ENCODE measurements at regions of chr9 and their contacts with region 1.

Region 1: DNA sequence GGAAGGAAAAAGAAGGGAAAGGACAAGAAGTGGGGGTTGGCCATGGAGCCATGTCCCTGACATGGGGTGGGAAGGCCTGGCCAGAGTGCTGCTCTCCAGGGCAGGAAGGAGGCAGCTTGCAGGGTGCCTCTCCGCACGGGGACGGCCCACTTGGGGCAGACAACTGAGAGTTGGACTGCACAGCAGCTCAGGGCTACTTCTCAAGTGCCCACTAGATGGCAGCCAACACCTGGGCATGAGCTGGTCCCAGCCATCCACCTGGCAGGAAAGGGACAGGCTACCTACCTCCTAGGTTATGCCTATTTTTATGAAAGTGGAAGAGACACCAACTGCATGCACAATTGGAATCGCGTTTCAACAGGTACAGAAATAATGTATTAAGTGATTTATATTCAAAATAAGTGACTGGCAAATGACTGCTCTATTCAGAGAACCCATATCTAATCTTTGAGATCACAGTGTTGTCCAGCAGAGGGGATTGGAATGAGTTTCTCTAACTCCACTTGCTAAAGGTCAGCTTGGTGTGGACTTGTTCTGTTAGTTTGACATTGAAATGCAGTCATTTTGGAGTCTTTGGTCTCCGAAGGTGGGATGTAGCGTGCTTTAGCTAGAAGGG is 113.4 kb downstream of the SYK start:
- DNase-seq: peak; percentile 87
- H3K4me3 ChIP-seq: peak overlapping the region in 1 of 2 experiments; percentile 37; a peak in 1 of 4 replicates
- H3K27ac ChIP-seq: no peak overlapping the region
- H3K4me1 ChIP-seq: no peaks in the 10 kb centered on the region; a peak in 1 of 4 replicates
- H3K27me3 ChIP-seq: no peaks in the 10 kb centered on the region
- CTCF ChIP-seq: peak; percentile 95
- EP300 ChIP-seq: no peak
- RAD21 ChIP-seq: peak; percentile 94

Region 2: DNA sequence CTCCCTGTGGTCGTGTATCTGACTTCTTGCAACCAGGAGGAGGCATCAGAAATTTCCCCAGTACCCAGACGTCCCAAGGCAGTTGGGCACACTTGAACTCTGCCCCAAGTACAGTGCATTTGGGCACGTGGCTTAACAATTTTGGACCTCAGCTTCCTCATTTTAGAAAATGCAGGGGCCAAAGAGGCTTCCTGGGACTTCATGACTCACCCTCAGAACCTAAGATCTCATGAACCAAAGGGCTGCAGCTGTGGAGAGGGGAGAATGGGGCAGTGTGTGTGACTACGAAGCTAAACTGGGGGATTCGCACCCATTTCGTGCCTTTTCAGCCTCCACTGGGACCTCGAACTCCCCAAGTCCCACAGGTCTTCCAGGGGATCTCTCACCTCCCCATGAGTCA is 54.1 kb before region 1 on chr9:
- CTCF ChIA-PET with region 1: no interaction called
- POLR2A ChIA-PET with region 1: no interaction called
- DNase-seq: no peak
- H3K4me3 ChIP-seq: no peak overlapping the region
- H3K27ac ChIP-seq: no peak overlapping the region
- H3K4me1 ChIP-seq: no peaks in the 10 kb centered on the region; a peak in 1 of 4 replicates
- H3K27me3 ChIP-seq: no peaks in the 10 kb centered on the region
- CTCF ChIP-seq: no peak
- EP300 ChIP-seq: no peak
- RAD21 ChIP-seq: no peak

Region 3: GRCh38 chr9:90894986-90895687 is 19.8 kb before region 1 on chr9:
- CTCF ChIA-PET with region 1: interaction called, 44 read pairs
- POLR2A ChIA-PET with region 1: no interaction called
- DNase-seq: peak; percentile 60
- H3K4me3 ChIP-seq: no peak overlapping the region
- H3K27ac ChIP-seq: no peak overlapping the region
- H3K4me1 ChIP-seq: no peaks in the 10 kb centered on the region; a peak in 1 of 4 replicates
- H3K27me3 ChIP-seq: no peaks in the 10 kb centered on the region; the same call in 1 of the 2 replicates
- CTCF ChIP-seq: peak; percentile 61
- EP300 ChIP-seq: no peak
- RAD21 ChIP-seq: no peak

Region 4: DNA sequence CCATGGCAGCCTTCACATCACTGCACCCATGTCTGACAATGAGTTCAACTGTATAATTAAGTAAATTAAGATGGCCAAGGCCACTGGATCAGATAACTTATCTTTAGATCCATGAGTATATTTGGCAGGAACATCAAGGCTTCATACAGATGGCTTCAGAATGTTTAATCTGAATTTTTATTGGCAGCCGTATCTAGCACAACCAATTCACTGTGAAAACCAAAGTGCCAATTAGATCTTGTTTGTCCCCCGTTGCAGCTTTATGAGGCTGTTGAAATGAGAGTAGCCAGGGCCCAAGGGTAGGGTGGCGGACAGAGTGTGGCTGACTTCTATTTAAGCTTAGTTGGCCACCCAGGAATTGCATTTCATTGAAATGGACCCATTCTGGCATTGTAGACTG is 24.4 kb after region 1 on chr9:
- CTCF ChIA-PET with region 1: interaction called, 44 read pairs
- POLR2A ChIA-PET with region 1: no interaction called
- DNase-seq: no peak
- H3K4me3 ChIP-seq: no peak overlapping the region
- H3K27ac ChIP-seq: no peak overlapping the region
- H3K4me1 ChIP-seq: no peaks in the 10 kb centered on the region; a peak in 1 of 4 replicates
- H3K27me3 ChIP-seq: no peaks in the 10 kb centered on the region; the same call in 1 of the 2 replicates
- CTCF ChIP-seq: no peak
- EP300 ChIP-seq: no peak
- RAD21 ChIP-seq: no peak

Region 5: DNA sequence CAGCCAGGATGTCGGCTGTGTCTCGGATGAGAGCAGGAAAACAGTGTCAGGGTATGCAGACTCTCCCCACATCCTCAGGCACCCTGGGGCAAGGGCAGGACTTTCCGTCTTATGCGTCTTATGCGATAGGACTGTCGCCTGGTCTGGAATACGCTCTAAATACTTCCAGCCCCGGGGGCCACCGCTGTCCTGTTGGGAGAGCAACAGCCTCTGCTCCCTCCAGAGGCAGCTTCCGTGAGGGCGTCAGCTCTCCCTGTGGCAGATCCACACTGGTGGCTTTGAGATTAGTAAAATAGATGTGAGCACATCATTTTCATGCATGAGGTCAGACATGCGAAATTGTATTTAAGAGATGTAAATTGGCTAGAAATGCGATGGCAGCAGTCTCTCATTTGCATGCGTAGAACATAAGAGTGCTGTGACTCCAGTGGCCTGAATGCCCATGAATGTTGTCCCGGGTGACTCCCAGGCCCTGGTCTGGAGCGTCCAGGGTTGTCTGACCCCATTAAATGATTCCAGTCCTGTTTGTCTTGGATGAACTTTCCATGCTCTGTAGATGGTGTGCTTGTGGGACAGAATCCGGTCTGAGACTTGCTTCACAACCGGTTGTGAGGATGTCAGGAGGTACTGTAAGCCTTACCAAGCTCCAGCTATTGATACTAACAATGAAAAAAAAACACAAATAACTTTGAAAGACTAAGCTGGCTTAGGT is 114.8 kb after region 1 on chr9:
- CTCF ChIA-PET with region 1: interaction called, 11 read pairs
- POLR2A ChIA-PET with region 1: no interaction called
- DNase-seq: no peak
- H3K4me3 ChIP-seq: no peak overlapping the region
- H3K27ac ChIP-seq: no peak overlapping the region
- H3K4me1 ChIP-seq: no peaks in the 10 kb centered on the region
- H3K27me3 ChIP-seq: no peaks in the 10 kb centered on the region
- CTCF ChIP-seq: no peak
- EP300 ChIP-seq: no peak
- RAD21 ChIP-seq: no peak

Region 6: GRCh38 chr9:91422758-91423711 is 508.1 kb after region 1 on chr9:
- CTCF ChIA-PET with region 1: interaction called, 67 read pairs
- POLR2A ChIA-PET with region 1: interaction called, 3 read pairs
- DNase-seq: no peak
- H3K4me3 ChIP-seq: peak overlapping the region; percentile 77 to 94
- H3K27ac ChIP-seq: peak overlapping the region; percentile 76 to 85
- H3K4me1 ChIP-seq: peaks cover 6 to 17% of the 10 kb centered on the region in 2 experiments
- H3K27me3 ChIP-seq: no peaks in the 10 kb centered on the region
- CTCF ChIP-seq: peak; percentile 28
- EP300 ChIP-seq: no peak
- RAD21 ChIP-seq: no peak

Region 7: DNA sequence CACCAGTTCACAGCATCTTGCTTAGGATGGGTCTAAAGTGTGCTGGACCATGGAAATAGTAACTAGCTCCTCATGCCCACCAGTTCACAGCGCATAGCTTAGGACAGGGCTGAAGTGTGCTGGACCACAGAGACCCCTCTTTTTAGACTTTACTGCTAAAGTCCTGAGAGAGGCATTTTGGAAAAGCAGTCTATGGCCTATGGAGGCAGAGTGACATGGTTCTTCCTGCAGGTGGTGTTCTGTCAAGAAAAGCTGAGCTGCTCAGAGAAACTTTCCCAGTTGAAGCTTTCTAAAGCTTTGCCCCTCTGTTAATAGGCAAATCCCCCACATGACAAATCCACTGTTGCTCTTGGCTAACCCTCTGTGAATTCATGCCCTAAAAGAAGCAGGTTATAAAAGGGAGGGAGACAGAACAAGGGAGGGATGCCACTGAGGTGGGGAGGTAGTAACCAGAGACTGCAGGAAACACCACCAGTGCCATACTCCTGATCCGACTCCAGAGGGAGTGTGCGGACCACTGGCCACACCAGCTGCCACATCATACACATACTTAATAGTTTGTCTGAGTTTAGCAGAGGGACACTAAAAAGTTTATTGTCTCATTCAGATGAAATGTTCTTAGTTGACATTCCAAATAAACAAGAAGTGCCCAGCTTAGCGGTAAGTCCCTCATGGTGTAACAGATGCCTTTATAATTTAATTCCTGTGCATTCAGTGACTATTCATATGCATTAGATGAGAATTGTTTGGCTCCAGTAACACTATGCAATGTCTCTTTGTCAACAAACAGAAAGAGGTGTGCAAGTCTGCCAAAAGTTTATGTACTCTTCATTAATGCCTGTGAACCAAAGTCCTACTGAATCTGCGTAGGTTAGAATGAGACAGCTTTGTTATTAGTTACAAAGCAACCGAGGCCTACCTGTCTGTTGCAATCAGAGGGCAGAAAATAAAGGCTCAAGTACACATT is 744.8 kb after region 1 on chr9:
- CTCF ChIA-PET with region 1: interaction called, 18 read pairs
- POLR2A ChIA-PET with region 1: no interaction called
- DNase-seq: peak; percentile 71
- H3K4me3 ChIP-seq: no peak overlapping the region
- H3K27ac ChIP-seq: no peak overlapping the region
- H3K4me1 ChIP-seq: peaks cover 0 to 4% of the 10 kb centered on the region in 2 experiments; a peak in 2 of 4 replicates
- H3K27me3 ChIP-seq: no peaks in the 10 kb centered on the region; the same call in 1 of the 2 replicates
- CTCF ChIP-seq: peak; percentile 46
- EP300 ChIP-seq: no peak
- RAD21 ChIP-seq: peak; percentile 83

Region 8: GRCh38 chr9:91720751-91721705 is 806.1 kb after region 1 on chr9:
- CTCF ChIA-PET with region 1: interaction called, 47 read pairs
- POLR2A ChIA-PET with region 1: no interaction called
- DNase-seq: peak; percentile 53
- H3K4me3 ChIP-seq: no peak overlapping the region
- H3K27ac ChIP-seq: no peak overlapping the region
- H3K4me1 ChIP-seq: no peaks in the 10 kb centered on the region; a peak in 1 of 4 replicates
- H3K27me3 ChIP-seq: no peaks in the 10 kb centered on the region
- CTCF ChIP-seq: no peak
- EP300 ChIP-seq: no peak
- RAD21 ChIP-seq: no peak

Measured in SK-N-SH (cell line).